ENCODE measurements at regions of chr14 and their contacts with region 1.

Region 1: DNA sequence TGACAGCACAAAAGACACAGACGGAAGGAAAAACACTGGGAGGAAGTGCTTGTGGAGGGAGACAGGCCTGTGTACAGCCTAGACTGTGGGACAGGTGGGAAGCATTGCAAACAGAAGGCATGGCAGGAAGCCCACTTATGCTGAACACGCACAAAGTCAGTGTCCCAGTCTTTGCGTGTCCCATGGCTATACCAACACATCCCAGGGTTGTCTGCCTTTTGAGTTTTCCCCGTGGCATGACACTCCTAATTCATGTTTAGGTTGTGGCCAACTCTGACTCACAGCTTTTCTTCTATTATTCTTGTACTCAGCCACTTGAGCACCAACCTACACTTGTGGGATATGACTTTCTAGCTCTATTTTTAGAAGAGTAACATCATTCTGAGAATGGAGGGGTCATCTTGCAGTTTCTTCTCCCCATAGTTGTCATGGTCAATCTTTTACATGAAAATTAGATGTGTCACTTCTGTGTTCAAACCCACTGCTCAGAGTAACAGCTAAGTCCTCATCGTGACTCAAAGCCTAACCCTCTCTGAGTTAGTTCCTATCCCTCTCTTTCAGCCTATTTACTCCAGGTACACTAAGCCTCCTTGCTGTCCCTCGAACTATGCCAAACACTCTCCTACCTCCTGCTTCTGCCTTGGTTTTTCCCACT is 27.5 kb upstream of the JPH4 start:
- DNase-seq: no peak
- H3K4me3 Mint-ChIP-seq: peak overlapping the region; percentile 6
- H3K27ac Mint-ChIP-seq: peak overlapping the region; percentile 84
- H3K4me1 Mint-ChIP-seq: peaks cover 32% of the 10 kb centered on the region
- H3K27me3 Mint-ChIP-seq: no peaks in the 10 kb centered on the region

Region 2: GRCh38 chr14:23877538-23878180 is 271.6 kb after region 1 on chr14:
- intact Hi-C with region 1: loop called (anchors 2 kb)
- DNase-seq: no peak
- H3K4me3 Mint-ChIP-seq: no peak overlapping the region
- H3K27ac Mint-ChIP-seq: peak overlapping the region; percentile 82
- H3K4me1 Mint-ChIP-seq: no peaks in the 10 kb centered on the region
- H3K27me3 Mint-ChIP-seq: peaks cover 6% of the 10 kb centered on the region